ENCODE measurements at regions of chr1 and their contacts with region 1.

Region 1: DNA sequence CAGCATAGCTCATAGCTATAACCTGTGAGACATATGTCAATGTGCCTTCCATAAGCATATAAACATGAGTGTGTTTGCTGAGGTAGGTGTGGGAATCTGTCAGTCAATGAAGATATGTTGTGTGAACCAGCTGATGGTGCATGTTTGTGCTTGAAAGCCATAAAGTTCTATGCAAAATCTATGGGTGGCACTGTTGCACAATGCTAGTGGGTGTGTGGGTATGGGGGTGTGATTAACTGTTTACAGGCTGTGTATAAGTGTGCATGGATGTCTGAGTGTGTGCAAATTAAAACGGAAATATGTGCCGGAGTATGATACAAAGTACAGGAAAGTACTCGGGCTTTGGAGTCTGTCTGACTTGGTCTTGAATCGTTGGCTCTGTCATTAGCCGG is 1.0 kb upstream of the ATP2B4 start:
- DNase-seq: peak in 8 of 9 experiments; percentile 38 to 91 (median 72)
- ATAC-seq: peak; percentile 63
- H3K4me3 ChIP-seq: peak overlapping the region; percentile 77 to 89
- H3K4me3 Mint-ChIP-seq: peak overlapping the region; percentile 91
- H3K27ac ChIP-seq: peak overlapping the region; percentile 58 to 81
- H3K27ac Mint-ChIP-seq: peak overlapping the region; percentile 81
- H3K4me1 ChIP-seq: peaks cover 41% of the 10 kb centered on the region
- H3K4me1 Mint-ChIP-seq: peaks cover 44% of the 10 kb centered on the region
- H3K27me3 ChIP-seq: no peaks in the 10 kb centered on the region
- H3K27me3 Mint-ChIP-seq: no peaks in the 10 kb centered on the region
- CTCF ChIP-seq: peak; percentile 78

Region 2: DNA sequence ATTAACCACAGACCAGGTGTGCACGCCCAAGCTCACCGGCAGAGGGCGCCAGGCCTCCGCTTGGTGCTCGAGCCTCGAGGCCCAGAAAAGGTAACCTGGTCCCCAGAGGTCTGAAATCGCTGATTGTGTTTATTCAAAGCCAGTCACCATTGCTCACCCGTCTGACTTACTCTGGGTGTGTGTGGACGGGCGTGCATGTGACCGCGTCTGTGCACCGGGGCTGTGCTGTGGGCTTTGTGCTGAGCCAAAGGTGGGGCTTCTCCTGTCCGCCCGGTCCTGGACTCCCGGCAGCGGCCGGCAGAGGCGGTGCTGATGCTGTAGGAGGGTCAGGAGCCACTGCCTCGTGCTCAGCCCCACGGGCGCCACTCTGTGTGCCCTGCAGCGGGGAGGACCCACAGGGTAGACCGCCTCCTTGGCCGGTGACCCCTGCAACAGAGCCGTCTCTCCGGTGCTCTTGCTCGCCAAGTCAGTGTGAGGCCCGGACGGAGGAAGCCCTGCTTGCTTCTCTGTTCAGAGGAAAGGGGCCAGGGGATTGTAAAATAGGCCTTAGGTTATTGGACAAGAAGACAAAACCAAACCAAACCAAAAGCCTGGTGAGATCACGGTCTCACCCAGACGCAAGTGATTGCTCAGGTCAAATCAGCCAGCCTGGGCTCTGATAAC is 352.3 kb before region 1 on chr1:
- CTCF ChIA-PET with region 1: interaction called, 35 read pairs
- POLR2A ChIA-PET with region 1: no interaction called
- intact Hi-C with region 1: loop called (anchors 5 kb)
- DNase-seq: peak; percentile 82 to 97 (median 92)
- ATAC-seq: peak; percentile 66
- H3K4me3 ChIP-seq: peak overlapping the region; percentile 37 to 63
- H3K4me3 Mint-ChIP-seq: peak overlapping the region; percentile 74
- H3K27ac ChIP-seq: peak overlapping the region; percentile 10 to 48
- H3K27ac Mint-ChIP-seq: peak overlapping the region; percentile 92
- H3K4me1 ChIP-seq: peaks cover 49% of the 10 kb centered on the region
- H3K4me1 Mint-ChIP-seq: peaks cover 52% of the 10 kb centered on the region
- H3K27me3 ChIP-seq: no peaks in the 10 kb centered on the region
- H3K27me3 Mint-ChIP-seq: no peaks in the 10 kb centered on the region
- CTCF ChIP-seq: peak; percentile 94

Region 3: DNA sequence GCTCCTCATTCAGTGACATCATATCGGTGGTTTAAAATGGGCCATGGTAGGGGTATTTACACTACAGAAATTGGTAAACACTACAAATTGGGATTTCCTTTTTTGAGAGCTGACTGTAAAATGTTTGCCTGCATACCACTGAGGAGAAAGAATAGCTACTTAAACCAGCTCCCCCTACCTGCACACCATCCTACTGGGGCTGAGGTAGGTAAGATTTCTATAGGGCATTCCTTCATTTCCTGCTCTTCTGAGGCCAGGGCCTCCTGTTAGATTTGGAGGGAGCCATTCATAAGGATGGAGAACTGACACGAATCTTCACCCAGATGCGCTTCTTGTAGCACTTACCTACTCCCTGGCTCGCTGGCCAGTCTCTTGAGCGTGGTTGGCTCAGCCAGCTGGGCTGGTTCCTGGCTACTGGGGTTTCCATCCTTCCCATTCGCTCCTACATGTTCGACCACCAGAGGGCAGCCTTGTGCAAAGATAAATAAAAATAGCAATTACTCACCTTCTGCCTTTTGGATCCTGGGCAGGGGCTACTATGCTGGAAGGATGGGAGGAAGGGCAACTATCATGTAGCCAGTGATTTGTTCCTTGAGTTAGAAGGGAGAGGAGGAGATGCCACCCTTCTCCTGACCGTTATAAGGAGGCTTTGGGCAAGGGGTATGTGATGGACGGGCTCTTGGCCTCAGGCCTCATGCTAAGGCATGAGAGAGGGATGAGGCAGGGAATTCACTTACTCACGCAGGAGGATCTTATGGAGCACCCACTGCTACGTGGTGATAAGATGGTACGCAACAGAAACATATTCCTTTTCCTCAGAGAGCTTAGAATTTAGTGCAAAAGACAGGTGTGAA is 121.0 kb before region 1 on chr1:
- CTCF ChIA-PET with region 1: interaction called, 28 read pairs
- POLR2A ChIA-PET with region 1: interaction called, 5 read pairs
- intact Hi-C with region 1: loop called (anchors 1 kb)
- DNase-seq: peak; percentile 34 to 86 (median 77)
- ATAC-seq: peak; percentile 66
- H3K4me3 ChIP-seq: no peak overlapping the region
- H3K4me3 Mint-ChIP-seq: no peak overlapping the region
- H3K27ac ChIP-seq: no peak overlapping the region
- H3K27ac Mint-ChIP-seq: no peak overlapping the region
- H3K4me1 ChIP-seq: no peaks in the 10 kb centered on the region
- H3K4me1 Mint-ChIP-seq: peaks cover 2% of the 10 kb centered on the region
- H3K27me3 ChIP-seq: peaks cover 0 to 6% of the 10 kb centered on the region in 2 experiments
- H3K27me3 Mint-ChIP-seq: peaks cover 3% of the 10 kb centered on the region
- CTCF ChIP-seq: peak; percentile 88

Region 4: GRCh38 chr1:203607533-203607873 is 18.1 kb before region 1 on chr1:
- CTCF ChIA-PET with region 1: interaction called, 32 read pairs
- POLR2A ChIA-PET with region 1: interaction called, 13 read pairs
- intact Hi-C with region 1: loop called (anchors 1 to 2 kb)
- DNase-seq: no peak
- ATAC-seq: no peak
- H3K4me3 ChIP-seq: no peak overlapping the region
- H3K4me3 Mint-ChIP-seq: no peak overlapping the region
- H3K27ac ChIP-seq: peak overlapping the region in 1 of 2 experiments; percentile 61
- H3K27ac Mint-ChIP-seq: peak overlapping the region; percentile 93
- H3K4me1 ChIP-seq: peaks cover 20% of the 10 kb centered on the region
- H3K4me1 Mint-ChIP-seq: peaks cover 48% of the 10 kb centered on the region
- H3K27me3 ChIP-seq: no peaks in the 10 kb centered on the region
- H3K27me3 Mint-ChIP-seq: no peaks in the 10 kb centered on the region
- CTCF ChIP-seq: no peak

Region 5: GRCh38 chr1:203673550-203674427 is 48.2 kb after region 1 on chr1:
- CTCF ChIA-PET with region 1: interaction called, 20 read pairs
- POLR2A ChIA-PET with region 1: interaction called, 28 read pairs
- intact Hi-C with region 1: loop called (anchors 1 to 2 kb)
- DNase-seq: peak; percentile 43 to 94 (median 70)
- ATAC-seq: peak; percentile 88
- H3K4me3 ChIP-seq: no peak overlapping the region
- H3K4me3 Mint-ChIP-seq: peak overlapping the region; percentile 56
- H3K27ac ChIP-seq: peak overlapping the region; percentile 11 to 78
- H3K27ac Mint-ChIP-seq: peak overlapping the region; percentile 98
- H3K4me1 ChIP-seq: peaks cover 48% of the 10 kb centered on the region
- H3K4me1 Mint-ChIP-seq: peaks cover 66% of the 10 kb centered on the region
- H3K27me3 ChIP-seq: no peaks in the 10 kb centered on the region
- H3K27me3 Mint-ChIP-seq: no peaks in the 10 kb centered on the region
- CTCF ChIP-seq: peak; percentile 41

Region 6: GRCh38 chr1:203702130-203702577 is 76.5 kb after region 1 on chr1:
- CTCF ChIA-PET with region 1: interaction called, 108 read pairs
- POLR2A ChIA-PET with region 1: interaction called, 32 read pairs
- intact Hi-C with region 1: loop called (anchors 1 kb)
- DNase-seq: peak; percentile 33 to 84 (median 75)
- ATAC-seq: peak; percentile 70
- H3K4me3 ChIP-seq: no peak overlapping the region
- H3K4me3 Mint-ChIP-seq: no peak overlapping the region
- H3K27ac ChIP-seq: peak overlapping the region in 1 of 2 experiments; percentile 29
- H3K27ac Mint-ChIP-seq: peak overlapping the region; percentile 69
- H3K4me1 ChIP-seq: no peaks in the 10 kb centered on the region
- H3K4me1 Mint-ChIP-seq: peaks cover 4% of the 10 kb centered on the region
- H3K27me3 ChIP-seq: no peaks in the 10 kb centered on the region
- H3K27me3 Mint-ChIP-seq: no peaks in the 10 kb centered on the region
- CTCF ChIP-seq: peak; percentile 91

Region 7: DNA sequence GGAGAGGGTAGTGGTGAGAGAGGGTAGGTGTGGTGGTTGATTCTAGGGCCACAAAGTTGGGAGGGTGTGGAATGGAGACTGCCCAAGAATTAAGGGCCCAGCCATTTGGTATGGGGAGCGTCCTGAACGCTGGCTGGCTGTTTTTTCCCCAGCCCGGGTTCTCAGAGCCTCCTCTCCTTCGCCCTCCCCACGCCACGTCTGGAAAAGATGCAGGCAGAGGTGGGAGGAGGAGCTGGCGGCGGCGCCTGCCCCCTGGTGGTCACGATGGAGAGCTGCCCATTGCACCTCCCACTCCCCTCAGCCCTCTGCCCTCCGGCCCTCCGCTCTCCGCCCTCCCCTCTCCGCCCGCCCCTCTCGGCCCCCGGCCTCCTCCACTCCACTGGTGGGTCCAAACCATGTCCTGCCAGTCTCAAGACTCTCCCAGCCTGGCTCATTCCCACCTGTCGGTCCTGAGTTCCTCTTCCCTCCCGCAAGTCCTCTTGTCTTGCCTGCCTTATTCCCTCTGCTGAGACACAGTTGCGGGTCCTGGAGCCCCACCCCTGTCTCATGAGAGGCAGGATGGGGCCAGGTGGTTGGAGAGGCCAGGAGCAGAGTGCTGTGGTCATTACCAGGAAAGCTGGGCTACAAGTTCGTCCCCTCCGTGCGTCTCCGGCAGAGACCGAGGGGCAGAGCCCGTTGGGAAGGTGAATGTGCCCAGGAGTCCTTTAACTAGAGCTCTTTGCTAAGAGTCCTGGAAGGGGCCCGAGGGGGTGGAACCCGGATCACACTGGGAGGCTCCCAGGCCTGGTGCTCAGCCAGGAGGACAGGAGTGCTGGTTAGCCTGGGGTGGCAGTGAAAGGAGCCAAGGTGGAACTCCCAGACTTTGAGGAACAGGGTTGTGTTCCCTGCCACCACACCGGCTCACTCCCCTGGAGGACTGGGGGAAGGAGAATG is 503.6 kb after region 1 on chr1:
- CTCF ChIA-PET with region 1: interaction called, 11 read pairs
- POLR2A ChIA-PET with region 1: no interaction called
- intact Hi-C with region 1: loop called (anchors 2 to 10 kb)
- DNase-seq: peak; percentile 27 to 82 (median 57)
- ATAC-seq: peak; percentile 89
- H3K4me3 ChIP-seq: no peak overlapping the region
- H3K4me3 Mint-ChIP-seq: no peak overlapping the region
- H3K27ac ChIP-seq: no peak overlapping the region
- H3K27ac Mint-ChIP-seq: no peak overlapping the region
- H3K4me1 ChIP-seq: peaks cover 7% of the 10 kb centered on the region
- H3K4me1 Mint-ChIP-seq: peaks cover 10% of the 10 kb centered on the region
- H3K27me3 ChIP-seq: no peaks in the 10 kb centered on the region
- H3K27me3 Mint-ChIP-seq: no peaks in the 10 kb centered on the region
- CTCF ChIP-seq: peak; percentile 71